Transverse colon (tissue), 4 donors: ENCODE measurements at regions of chr10 and their contacts with region 1.

Region 1: DNA sequence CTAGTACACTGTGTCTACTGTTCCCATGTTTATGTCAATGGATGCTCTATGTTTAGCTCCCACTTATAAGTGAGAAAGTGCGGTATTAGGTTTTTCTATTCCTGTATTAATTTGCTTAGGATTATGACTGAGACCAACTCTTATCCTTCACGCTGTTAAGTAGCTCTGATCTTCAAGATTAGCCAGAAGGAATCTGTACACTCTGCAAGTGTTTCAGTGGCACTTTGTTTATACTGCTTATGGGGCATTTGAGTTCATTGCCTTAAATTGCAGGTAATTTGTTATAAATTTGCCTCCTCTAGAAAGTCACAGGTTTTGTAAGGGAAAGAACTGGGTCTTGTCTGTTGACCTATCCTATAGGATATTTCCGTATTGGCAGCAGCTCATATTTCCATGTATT is 6.4 kb upstream of the ACSM6 start:
- DNase-seq: no peak
- H3K4me3 ChIP-seq: no peak overlapping the region
- H3K27ac ChIP-seq: no peak overlapping the region
- H3K4me1 ChIP-seq: peaks cover 0 to 11% (median 3%) of the 10 kb centered on the region in 4 donors
- H3K27me3 ChIP-seq: no peaks in the 10 kb centered on the region
- CTCF ChIP-seq: no peak
- EP300 ChIP-seq: no peak
- POLR2A ChIP-seq: no peak

Region 2: DNA sequence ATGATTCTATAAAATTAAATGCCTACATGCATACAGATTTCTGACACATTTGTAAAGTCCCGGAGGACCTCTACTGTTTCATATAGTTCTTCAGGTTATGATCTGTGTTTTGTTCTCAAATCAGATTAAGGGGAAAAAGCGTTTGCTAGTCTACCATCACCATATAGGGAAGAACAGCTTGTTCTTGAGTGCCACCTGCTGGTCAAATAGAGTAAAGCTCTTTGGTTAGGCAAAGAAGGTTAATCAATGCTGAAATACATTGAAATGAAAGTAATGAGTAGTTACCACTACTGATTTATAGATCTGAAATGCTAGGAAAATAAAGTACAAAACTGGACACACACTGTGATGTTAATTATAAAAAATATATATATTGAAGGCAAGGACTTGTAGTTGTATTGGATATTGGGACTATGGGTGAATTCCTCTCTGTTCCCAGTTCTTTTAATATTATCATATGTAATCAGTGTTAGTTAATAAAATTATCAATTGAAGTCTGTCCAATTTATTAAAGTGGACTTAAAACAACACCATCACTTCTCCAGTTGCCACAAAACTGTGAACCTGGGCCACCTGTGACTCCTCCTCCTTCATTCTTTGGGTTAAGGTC is 175.8 kb after region 1 on chr10:
- in situ Hi-C with region 1: loop called in 1 of 4 experiments (anchors 5 kb)
- intact Hi-C with region 1: no loop called
- DNase-seq: peak; percentile 47
- H3K4me3 ChIP-seq: no peak overlapping the region
- H3K27ac ChIP-seq: peak overlapping the region in 1 of 4 donors; percentile 15
- H3K4me1 ChIP-seq: peaks cover 3 to 15% (median 9%) of the 10 kb centered on the region in 4 donors
- H3K27me3 ChIP-seq: no peaks in the 10 kb centered on the region
- CTCF ChIP-seq: peak; percentile 83 to 93 (median 87)
- EP300 ChIP-seq: no peak
- POLR2A ChIP-seq: no peak